Activated CD4-positive, alpha-beta T cell treated with anti-CD3 and anti-CD28 coated beads for 36 hours (primary cell): ENCODE measurements at regions of chrX and their contacts with region 1.

Region 1: GRCh38 chrX:53683556-53684414 is 2.7 kb downstream of the HUWE1 start:
- DNase-seq: peak; percentile 94
- ATAC-seq: peak; percentile 76
- H3K4me3 Mint-ChIP-seq: peak overlapping the region; percentile 80
- H3K27ac Mint-ChIP-seq: peak overlapping the region; percentile 93
- H3K4me1 Mint-ChIP-seq: peaks cover 28% of the 10 kb centered on the region
- H3K27me3 Mint-ChIP-seq: no peaks in the 10 kb centered on the region

Region 2: DNA sequence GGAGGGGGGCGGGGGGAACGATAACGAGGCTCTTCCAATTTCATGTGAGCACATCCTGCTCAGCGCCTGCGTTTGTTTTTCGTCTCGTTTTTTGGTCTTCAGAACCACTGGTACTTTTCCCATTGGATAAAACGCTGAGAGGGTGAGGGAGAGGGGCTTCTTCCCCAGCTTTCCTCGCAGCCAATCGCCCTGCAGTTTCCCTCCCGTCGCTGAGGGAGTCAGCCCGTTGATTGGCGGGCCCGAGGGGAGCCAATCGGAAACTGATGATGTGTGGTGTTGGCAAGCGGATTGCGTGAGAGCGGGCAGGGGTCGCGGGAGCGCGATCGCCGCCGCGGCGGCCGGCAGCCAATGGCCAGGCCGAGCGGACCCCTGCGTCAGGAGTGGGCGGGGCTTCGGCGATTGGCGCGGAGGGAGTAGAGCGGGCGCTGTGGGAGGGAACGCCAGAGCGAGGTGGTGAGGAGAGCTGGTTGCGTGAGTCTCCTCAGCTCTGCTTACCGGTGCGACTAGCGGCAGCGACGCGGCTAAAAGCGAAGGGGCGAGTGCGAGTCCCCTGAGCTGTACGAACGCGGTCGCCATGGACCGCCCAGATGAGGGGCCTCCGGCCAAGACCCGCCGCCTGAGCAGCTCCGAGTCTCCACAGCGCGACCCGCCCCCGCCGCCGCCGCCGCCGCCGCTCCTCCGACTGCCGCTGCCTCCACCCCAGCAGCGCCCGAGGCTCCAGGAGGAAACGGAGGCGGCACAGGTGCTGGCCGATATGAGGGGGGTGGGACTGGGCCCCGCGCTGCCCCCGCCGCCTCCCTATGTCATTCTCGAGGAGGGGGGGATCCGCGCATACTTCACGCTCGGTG is 601.6 kb before region 1 on chrX and contains the start of gene TSPYL2:
- CTCF ChIA-PET with region 1: no interaction called
- POLR2A ChIA-PET with region 1: no interaction called
- intact Hi-C with region 1: loop called in 1 of 2 experiments (anchors 1 kb)
- DNase-seq: peak; percentile 96
- ATAC-seq: peak; percentile 91
- H3K4me3 Mint-ChIP-seq: peak within 1 kb of the TSS; percentile 91
- H3K27ac Mint-ChIP-seq: peak within 1 kb of the TSS; percentile 95
- H3K4me1 Mint-ChIP-seq: peaks cover 46% of the 10 kb centered on the region
- H3K27me3 Mint-ChIP-seq: no peaks in the 10 kb centered on the region
- total RNA-seq, gene TSPYL2: 56.7 to 73.3 TPM

Region 3: DNA sequence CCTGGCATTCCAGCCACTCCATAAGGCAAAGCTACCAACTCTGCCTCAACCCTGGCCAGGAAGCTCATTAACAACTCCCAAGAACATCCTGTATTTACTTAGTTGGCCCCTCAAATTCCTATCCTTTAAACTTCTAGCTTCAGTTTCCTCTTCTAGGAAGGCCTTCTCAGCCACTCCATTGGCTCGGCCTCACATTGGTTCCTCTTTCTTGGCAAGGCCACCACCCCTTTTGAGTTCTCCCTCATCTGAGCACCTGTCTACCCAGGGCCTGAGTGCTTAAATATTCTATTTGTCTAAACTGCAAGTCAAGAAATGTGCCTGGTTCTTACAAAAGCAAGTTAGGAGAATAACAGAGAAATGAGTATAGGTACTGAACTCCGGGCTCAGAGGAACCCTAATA is 271.3 kb before region 1 on chrX:
- CTCF ChIA-PET with region 1: no interaction called
- POLR2A ChIA-PET with region 1: no interaction called
- intact Hi-C with region 1: no loop called
- DNase-seq: no peak
- ATAC-seq: no peak
- H3K4me3 Mint-ChIP-seq: no peak overlapping the region
- H3K27ac Mint-ChIP-seq: no peak overlapping the region
- H3K4me1 Mint-ChIP-seq: peaks cover under 1% of the 10 kb centered on the region
- H3K27me3 Mint-ChIP-seq: no peaks in the 10 kb centered on the region

Region 4: GRCh38 chrX:53714580-53715345 is 31.0 kb after region 1 on chrX:
- CTCF ChIA-PET with region 1: interaction called, 7 read pairs
- POLR2A ChIA-PET with region 1: interaction called, 42 read pairs
- intact Hi-C with region 1: loop called (anchors 1 kb)
- DNase-seq: peak; percentile 77
- ATAC-seq: peak; percentile 74
- H3K4me3 Mint-ChIP-seq: peak overlapping the region; percentile 86
- H3K27ac Mint-ChIP-seq: peak overlapping the region; percentile 96
- H3K4me1 Mint-ChIP-seq: peaks cover 37% of the 10 kb centered on the region
- H3K27me3 Mint-ChIP-seq: no peaks in the 10 kb centered on the region

Region 5: DNA sequence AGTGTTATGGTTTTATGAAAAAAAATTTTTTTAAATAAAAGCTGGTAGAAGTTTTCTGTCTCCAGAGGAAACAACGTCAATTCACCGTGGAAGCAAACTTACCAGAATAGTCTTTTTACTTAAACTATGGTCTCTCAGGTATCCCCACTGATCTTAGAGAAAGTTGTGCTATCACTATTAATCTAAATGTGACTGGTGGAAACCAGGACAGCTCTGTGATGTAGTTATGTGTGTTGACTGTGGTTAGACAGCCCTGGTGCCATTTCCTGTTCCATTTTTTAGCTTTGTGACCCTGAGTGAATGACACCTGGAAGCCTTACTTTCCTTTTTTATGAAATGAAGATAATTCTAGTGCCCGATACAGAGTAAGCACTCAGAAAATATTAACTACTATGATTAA is 114.5 kb after region 1 on chrX:
- CTCF ChIA-PET with region 1: no interaction called
- POLR2A ChIA-PET with region 1: no interaction called
- intact Hi-C with region 1: no loop called
- DNase-seq: no peak
- ATAC-seq: no peak
- H3K4me3 Mint-ChIP-seq: no peak overlapping the region
- H3K27ac Mint-ChIP-seq: no peak overlapping the region
- H3K4me1 Mint-ChIP-seq: no peaks in the 10 kb centered on the region
- H3K27me3 Mint-ChIP-seq: no peaks in the 10 kb centered on the region

Region 6: DNA sequence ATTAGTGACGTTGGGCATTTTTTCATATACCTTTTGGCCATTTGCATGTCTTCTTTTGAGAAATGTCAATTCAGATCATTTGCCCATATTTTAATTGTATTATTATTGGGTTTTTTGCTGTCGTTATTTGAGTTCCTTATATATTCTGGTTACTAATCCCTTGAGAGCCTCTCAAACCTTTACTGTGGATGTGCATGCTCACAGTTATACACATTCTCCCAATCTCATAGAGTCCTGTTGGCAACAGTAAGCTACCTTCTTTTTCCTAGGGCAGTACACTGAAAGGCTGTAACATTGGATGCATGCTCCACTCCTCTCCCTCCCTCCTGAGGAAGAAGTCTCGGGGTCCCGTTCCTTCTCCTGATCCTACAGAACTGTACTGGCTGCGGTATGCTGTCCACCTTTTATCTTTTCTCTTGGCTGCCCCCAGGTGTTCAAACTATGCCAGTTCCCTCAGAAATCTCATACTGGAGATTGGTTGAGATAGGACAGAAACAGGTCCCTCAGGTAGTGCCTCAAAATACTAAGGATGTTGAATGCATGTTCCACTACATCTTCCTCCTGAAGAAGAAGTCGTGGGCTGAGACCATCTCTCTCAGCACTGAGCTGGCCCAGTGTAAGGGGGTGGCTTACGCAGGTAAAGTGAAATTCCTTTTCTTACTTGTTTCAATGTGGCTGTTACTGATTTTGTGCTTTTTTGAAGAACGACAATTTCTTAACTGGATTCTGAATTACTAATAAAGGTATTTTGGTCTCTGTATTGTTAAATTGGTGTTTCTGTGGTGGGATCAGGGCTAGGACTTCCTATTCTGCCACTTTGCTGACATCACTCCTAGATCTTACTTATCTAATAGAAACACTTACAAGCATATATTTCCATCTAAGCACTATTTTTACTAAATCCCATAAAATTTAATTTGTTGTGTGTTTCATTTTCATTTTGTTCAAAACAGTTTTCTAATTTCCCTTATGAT is 148.2 kb after region 1 on chrX:
- CTCF ChIA-PET with region 1: interaction called, 3 read pairs
- POLR2A ChIA-PET with region 1: no interaction called
- intact Hi-C with region 1: loop called (anchors 1 to 2 kb)
- DNase-seq: peak; percentile 61
- ATAC-seq: peak; percentile 92
- H3K4me3 Mint-ChIP-seq: peak overlapping the region; percentile 37
- H3K27ac Mint-ChIP-seq: peak overlapping the region; percentile 21
- H3K4me1 Mint-ChIP-seq: peaks cover 31% of the 10 kb centered on the region
- H3K27me3 Mint-ChIP-seq: no peaks in the 10 kb centered on the region

Region 7: GRCh38 chrX:54439967-54440871 is 756.4 kb after region 1 on chrX and contains the start of gene TSR2:
- CTCF ChIA-PET with region 1: no interaction called
- POLR2A ChIA-PET with region 1: no interaction called
- intact Hi-C with region 1: loop called in 1 of 2 experiments (anchors 1 kb)
- DNase-seq: peak; percentile 88
- ATAC-seq: peak; percentile 96
- H3K4me3 Mint-ChIP-seq: peak within 1 kb of the TSS; percentile 88
- H3K27ac Mint-ChIP-seq: peak within 1 kb of the TSS; percentile 83
- H3K4me1 Mint-ChIP-seq: peaks cover 18% of the 10 kb centered on the region
- H3K27me3 Mint-ChIP-seq: no peaks in the 10 kb centered on the region
- total RNA-seq, gene TSR2: 31.0 to 34.1 TPM